ENCODE measurements at regions of chr3 and their contacts with region 1.

Region 1: GRCh38 chr3:141452036-141452435 is 34.8 kb upstream of the RASA2 start:
- DNase-seq: no peak
- H3K4me3 ChIP-seq: no peak overlapping the region
- H3K27ac ChIP-seq: peak overlapping the region; percentile 44 to 65 (median 46)
- H3K4me1 ChIP-seq: peaks cover 0 to 40% (median 24%) of the 10 kb centered on the region in 4 donors
- H3K27me3 ChIP-seq: no peaks in the 10 kb centered on the region
- CTCF ChIP-seq: peak; percentile 53 to 60 (median 55)
- EP300 ChIP-seq: no peak
- POLR2A ChIP-seq: no peak

Region 2: GRCh38 chr3:140292684-140293083 is 1159.4 kb before region 1 on chr3:
- in situ Hi-C with region 1: no loop called
- intact Hi-C with region 1: no loop called
- DNase-seq: no peak
- H3K4me3 ChIP-seq: no peak overlapping the region
- H3K27ac ChIP-seq: no peak overlapping the region
- H3K4me1 ChIP-seq: no peaks in the 10 kb centered on the region
- H3K27me3 ChIP-seq: no peaks in the 10 kb centered on the region
- CTCF ChIP-seq: no peak
- EP300 ChIP-seq: no peak
- POLR2A ChIP-seq: no peak

Region 3: DNA sequence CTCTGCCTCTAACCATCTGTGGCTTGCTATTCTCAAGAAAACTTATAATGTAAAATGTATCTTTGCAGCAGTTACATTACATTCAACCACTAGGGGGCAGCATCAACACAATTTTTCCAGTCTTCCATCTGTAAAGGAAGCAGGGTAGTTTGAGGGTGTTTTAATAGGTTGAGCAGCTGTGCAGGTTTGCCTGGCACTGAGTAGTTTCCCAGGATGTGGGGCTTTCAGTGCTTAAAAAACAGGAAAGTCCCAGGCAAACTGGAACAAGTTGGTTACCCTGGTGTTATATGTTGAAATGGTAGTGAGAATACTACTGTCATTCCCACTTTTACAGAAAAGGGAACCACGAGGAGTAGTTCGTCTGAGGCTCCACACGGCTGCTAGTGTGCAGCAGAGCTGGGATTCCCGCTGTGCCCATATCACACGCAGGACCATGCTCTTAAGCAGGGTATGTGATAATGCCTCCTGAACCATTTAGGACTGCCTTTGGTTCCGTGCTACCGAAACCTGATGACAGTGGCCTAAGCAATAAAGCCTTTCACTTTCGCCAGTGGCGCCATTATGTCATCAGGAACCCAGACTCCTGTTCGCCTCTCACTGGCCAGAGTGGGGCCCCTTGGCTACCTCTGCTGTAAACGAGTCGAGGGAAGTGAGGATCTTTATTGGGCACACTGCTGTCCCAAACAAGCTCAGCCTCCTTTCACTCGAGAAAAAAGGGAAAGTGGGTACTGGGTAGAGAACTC is 148.4 kb before region 1 on chr3:
- in situ Hi-C with region 1: loop called in 3 of 4 experiments (anchors 5 to 10 kb)
- intact Hi-C with region 1: loop called (anchors 5 kb)
- DNase-seq: peak; percentile 60
- H3K4me3 ChIP-seq: no peak overlapping the region
- H3K27ac ChIP-seq: no peak overlapping the region
- H3K4me1 ChIP-seq: no peaks in the 10 kb centered on the region
- H3K27me3 ChIP-seq: no peaks in the 10 kb centered on the region
- CTCF ChIP-seq: peak; percentile 81 to 91 (median 85)
- EP300 ChIP-seq: no peak
- POLR2A ChIP-seq: no peak

Region 4: GRCh38 chr3:141311496-141312353 is 140.3 kb before region 1 on chr3:
- in situ Hi-C with region 1: loop called in 3 of 4 experiments (anchors 5 to 10 kb)
- intact Hi-C with region 1: loop called (anchors 5 kb)
- DNase-seq: peak; percentile 100
- H3K4me3 ChIP-seq: peak overlapping the region; percentile 53 to 74 (median 58)
- H3K27ac ChIP-seq: peak overlapping the region; percentile 69 to 89 (median 80)
- H3K4me1 ChIP-seq: peaks cover 6 to 15% (median 10%) of the 10 kb centered on the region in 4 donors
- H3K27me3 ChIP-seq: no peaks in the 10 kb centered on the region
- CTCF ChIP-seq: peak; percentile 55 to 97 (median 77)
- EP300 ChIP-seq: no peak
- POLR2A ChIP-seq: peak; percentile 69

Region 5: GRCh38 chr3:141353652-141354495 is 98.2 kb before region 1 on chr3:
- in situ Hi-C with region 1: loop called in 1 of 4 experiments (anchors 10 kb)
- intact Hi-C with region 1: loop called (anchors 5 kb)
- DNase-seq: no peak
- H3K4me3 ChIP-seq: no peak overlapping the region
- H3K27ac ChIP-seq: no peak overlapping the region
- H3K4me1 ChIP-seq: no peaks in the 10 kb centered on the region
- H3K27me3 ChIP-seq: no peaks in the 10 kb centered on the region
- CTCF ChIP-seq: no peak
- EP300 ChIP-seq: no peak
- POLR2A ChIP-seq: no peak

Region 6: DNA sequence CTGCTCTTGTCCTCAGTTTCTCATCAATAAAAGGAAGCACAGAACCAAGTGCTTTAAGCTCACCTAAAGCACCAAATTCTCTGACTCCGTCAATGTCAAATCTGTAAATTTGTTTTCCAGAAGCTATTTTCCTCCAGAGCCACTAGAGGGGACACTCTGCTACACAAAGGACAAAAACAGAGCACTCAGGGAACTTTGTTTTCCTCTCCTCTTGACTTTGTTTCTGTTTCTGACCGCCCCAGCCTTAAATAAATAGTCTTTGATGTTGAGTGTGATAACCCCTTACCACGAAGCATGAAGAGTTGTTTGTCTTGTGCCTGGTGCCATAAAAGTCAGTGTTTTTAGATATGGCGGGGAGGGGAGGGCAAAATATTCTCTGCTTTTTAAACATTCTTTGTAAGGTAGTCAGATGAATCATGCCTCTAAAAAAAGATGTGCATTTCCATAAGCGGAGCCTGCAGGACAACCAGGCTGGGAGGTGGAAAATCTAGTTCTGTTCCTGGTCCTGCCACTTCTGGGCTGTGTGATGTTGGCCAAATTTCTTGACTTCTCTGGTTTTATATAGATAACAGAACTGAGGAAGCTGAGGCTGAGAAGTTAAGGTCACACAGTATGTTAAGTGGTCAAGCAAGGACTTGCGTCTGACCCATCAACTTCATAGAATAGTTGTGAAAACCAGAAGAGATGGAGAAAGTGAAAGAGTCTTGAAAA is 91.0 kb before region 1 on chr3:
- in situ Hi-C with region 1: loop called in 2 of 4 experiments (anchors 10 kb)
- intact Hi-C with region 1: loop called (anchors 5 kb)
- DNase-seq: no peak
- H3K4me3 ChIP-seq: peak overlapping the region in 1 of 4 donors; percentile 25
- H3K27ac ChIP-seq: peak overlapping the region; percentile 46 to 71 (median 68)
- H3K4me1 ChIP-seq: peaks cover 3 to 27% (median 12%) of the 10 kb centered on the region in 4 donors
- H3K27me3 ChIP-seq: no peaks in the 10 kb centered on the region
- CTCF ChIP-seq: peak; percentile 64 to 90 (median 72)
- EP300 ChIP-seq: no peak
- POLR2A ChIP-seq: no peak

Measured in transverse colon (tissue), 4 donors.